PC-9 (cell line): ENCODE measurements at regions of chr21 and their contacts with region 1.

Region 1: GRCh38 chr21:43842742-43843141 is 22.3 kb upstream of the AGPAT3 start:
- DNase-seq: no peak
- H3K4me3 ChIP-seq: no peak overlapping the region
- H3K27ac ChIP-seq: no peak overlapping the region
- H3K4me1 ChIP-seq: no peaks in the 10 kb centered on the region
- H3K27me3 ChIP-seq: no peaks in the 10 kb centered on the region
- CTCF ChIP-seq: no peak

Region 2: DNA sequence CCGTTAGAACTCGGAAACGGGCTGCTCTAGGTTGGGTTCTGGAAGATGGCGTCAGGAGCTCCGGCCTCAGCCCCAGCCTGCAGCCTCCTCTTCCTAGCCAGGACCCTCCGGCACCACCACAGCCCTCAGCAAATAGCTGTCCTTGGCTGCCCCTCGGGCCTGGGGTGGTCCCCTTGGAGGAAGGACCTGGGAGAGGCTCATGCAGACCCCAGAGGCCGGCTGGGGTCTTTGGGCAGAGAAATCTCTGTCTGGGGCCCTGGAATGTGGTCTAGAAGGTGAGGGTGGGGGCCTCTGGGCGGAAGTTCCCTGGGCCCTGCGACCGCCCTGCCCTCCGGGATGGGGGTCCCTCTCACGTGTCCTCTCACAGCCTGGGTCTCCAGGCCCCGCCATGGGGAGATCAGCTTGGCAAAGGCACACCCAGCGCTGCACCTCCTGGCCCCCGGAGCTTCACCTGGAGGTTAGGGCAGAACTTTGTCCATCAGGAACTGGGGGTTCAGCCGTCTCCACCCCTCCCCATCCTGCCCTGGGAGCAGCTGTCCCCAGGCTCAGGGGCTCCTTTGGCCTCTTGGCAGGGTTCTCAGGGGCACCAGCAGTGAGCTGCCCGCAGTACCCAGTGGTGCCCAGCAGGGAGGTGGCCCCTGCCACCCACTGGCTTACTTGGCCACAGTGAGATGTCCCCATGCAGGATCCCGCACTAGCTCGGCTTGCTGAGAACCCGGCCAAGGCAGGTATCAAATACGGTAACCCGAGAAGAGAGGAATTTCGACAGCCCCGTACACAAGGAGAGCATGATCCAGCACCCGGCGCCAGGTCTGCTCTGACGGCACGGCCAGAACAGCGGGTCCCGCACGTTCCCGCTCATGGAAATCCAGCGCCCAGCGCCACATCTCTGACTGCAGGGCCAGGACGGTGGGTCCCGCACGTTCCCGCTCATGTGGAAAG is 16.8 kb before region 1 on chr21:
- CTCF ChIA-PET with region 1: no interaction called
- POLR2A ChIA-PET with region 1: no interaction called
- intact Hi-C with region 1: no loop called
- DNase-seq: peak in 1 of 2 experiments; percentile 22
- H3K4me3 ChIP-seq: no peak overlapping the region
- H3K27ac ChIP-seq: no peak overlapping the region
- H3K4me1 ChIP-seq: no peaks in the 10 kb centered on the region
- H3K27me3 ChIP-seq: peaks cover 3% of the 10 kb centered on the region; the same call in 1 of the 2 replicates
- CTCF ChIP-seq: peak; percentile 41; the same call in 1 of the 2 replicates

Region 3: GRCh38 chr21:43959231-43960116 is 116.7 kb after region 1 on chr21:
- CTCF ChIA-PET with region 1: no interaction called
- POLR2A ChIA-PET with region 1: no interaction called
- intact Hi-C with region 1: loop called (anchors 5 kb)
- DNase-seq: no peak
- H3K4me3 ChIP-seq: no peak overlapping the region
- H3K27ac ChIP-seq: no peak overlapping the region
- H3K4me1 ChIP-seq: no peaks in the 10 kb centered on the region
- H3K27me3 ChIP-seq: no peaks in the 10 kb centered on the region
- CTCF ChIP-seq: no peak